Endothelial cell of umbilical vein (primary cell): ENCODE measurements at regions of chr2 and their contacts with region 1.

Region 1: DNA sequence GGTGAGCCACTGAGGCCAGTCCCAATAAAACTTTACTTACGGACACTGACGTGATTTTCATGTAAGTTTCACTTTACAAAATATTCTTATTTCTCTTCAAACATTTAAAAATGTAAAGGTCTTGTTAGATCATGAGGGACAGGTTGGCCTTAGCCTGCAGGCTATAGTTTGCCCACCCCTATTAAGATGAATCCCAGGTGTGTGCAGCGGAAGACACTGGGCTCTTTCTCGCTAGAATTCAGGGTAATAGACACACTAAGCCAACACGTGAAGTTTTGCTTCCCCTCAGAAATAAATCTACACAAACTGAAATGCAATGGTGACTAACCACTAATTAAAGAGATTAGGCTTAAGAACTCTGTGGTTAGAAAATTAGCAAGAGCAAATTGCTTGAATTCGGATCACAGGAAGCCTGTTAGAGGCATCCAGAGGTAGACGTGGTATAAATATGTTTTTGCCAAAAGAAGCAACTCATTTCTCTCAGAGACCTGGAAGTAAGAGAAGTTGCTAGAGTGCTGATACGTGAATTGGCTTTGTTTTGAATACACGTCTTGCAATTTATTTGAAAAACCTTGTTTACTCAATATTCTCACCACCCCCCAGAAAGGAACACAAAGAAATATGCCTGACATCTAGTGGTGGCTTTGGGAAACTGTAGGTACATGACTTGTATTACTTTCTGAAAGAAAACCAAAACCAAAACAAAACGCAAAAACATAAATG is 151.6 kb downstream of the DTNB start:
- DNase-seq: peak; percentile 86
- H3K4me3 ChIP-seq: no peak overlapping the region
- H3K27ac ChIP-seq: no peak overlapping the region
- H3K4me1 ChIP-seq: peaks cover 7% of the 10 kb centered on the region
- H3K27me3 ChIP-seq: no peaks in the 10 kb centered on the region
- CTCF ChIP-seq: peak; percentile 55 to 61
- POLR2A ChIP-seq: no peak

Region 2: DNA sequence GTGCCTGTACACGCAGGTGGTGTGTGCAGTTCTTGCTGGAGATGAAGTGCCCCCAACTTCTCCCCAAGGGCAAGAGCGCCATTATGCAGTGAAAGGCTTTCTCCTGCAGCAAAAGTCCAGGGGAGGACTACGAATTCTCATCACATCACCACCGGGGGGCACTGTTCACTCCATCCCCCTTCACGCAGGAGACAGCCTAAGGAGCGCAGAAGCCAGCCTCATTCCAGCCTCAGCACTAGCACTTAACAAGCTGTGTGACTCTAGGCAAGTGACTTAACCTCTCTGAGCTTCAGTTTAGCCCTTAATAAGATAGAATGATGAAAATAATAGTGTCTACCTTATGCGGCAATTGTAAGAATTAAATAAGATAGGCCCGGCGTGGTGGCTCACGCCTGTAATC is 212.4 kb before region 1 on chr2:
- CTCF ChIA-PET with region 1: interaction called, 3 read pairs
- POLR2A ChIA-PET with region 1: no interaction called
- dilution Hi-C with region 1: no loop called
- intact Hi-C with region 1: loop called (anchors 2 kb)
- DNase-seq: peak; percentile 57
- H3K4me3 ChIP-seq: no peak overlapping the region
- H3K27ac ChIP-seq: no peak overlapping the region
- H3K4me1 ChIP-seq: no peaks in the 10 kb centered on the region
- H3K27me3 ChIP-seq: no peaks in the 10 kb centered on the region
- CTCF ChIP-seq: peak; percentile 53 to 64
- POLR2A ChIP-seq: no peak

Region 3: GRCh38 chr2:25362049-25362433 is 159.8 kb before region 1 on chr2:
- CTCF ChIA-PET with region 1: interaction called, 9 read pairs
- POLR2A ChIA-PET with region 1: no interaction called
- dilution Hi-C with region 1: no loop called
- intact Hi-C with region 1: loop called (anchors 1 kb)
- DNase-seq: peak; percentile 93
- H3K4me3 ChIP-seq: peak overlapping the region in 1 of 3 experiments; percentile 34
- H3K27ac ChIP-seq: no peak overlapping the region
- H3K4me1 ChIP-seq: peaks cover 4% of the 10 kb centered on the region
- H3K27me3 ChIP-seq: no peaks in the 10 kb centered on the region
- CTCF ChIP-seq: peak; percentile 96 to 97
- POLR2A ChIP-seq: peak; percentile 68

Region 4: DNA sequence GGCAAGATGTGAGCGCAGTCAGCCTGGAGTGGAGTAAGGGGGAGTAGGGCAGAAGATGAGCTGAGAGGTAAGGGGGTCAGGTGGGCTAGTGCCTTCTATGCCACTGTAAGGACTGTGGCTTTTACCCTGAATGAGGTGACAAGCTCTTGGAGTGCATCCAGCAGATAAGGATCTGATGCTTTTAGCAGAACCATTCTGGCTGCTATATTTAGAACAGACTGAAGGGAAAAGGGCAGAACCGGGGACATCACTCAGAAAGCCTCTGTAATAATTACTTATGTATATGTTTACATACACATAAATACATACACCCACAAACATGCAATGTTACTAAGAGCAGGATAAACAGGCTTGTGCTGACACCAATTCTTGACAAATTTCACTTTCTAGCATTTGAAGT is 26.8 kb after region 1 on chr2:
- CTCF ChIA-PET with region 1: no interaction called
- POLR2A ChIA-PET with region 1: no interaction called
- dilution Hi-C with region 1: no loop called
- intact Hi-C with region 1: no loop called
- DNase-seq: no peak
- H3K4me3 ChIP-seq: no peak overlapping the region
- H3K27ac ChIP-seq: no peak overlapping the region
- H3K4me1 ChIP-seq: no peaks in the 10 kb centered on the region
- H3K27me3 ChIP-seq: no peaks in the 10 kb centered on the region
- CTCF ChIP-seq: no peak
- POLR2A ChIP-seq: no peak